Caco-2 (cell line): ENCODE measurements at regions of chr16 and their contacts with region 1.

Region 1: GRCh38 chr16:29815793-29816693 is at the start of gene PAGR1:
- DNase-seq: peak; percentile 97 to 98
- H3K4me3 ChIP-seq: peak within 1 kb of the TSS; percentile 69
- H3K4me3 Mint-ChIP-seq: peak within 1 kb of the TSS; percentile 89
- H3K27ac Mint-ChIP-seq: peak within 1 kb of the TSS; percentile 93
- H3K4me1 ChIP-seq: peaks cover 14% of the 10 kb centered on the region
- H3K4me1 Mint-ChIP-seq: peaks cover 41% of the 10 kb centered on the region
- H3K27me3 ChIP-seq: no peaks in the 10 kb centered on the region
- H3K27me3 Mint-ChIP-seq: no peaks in the 10 kb centered on the region
- CTCF ChIP-seq: peak; percentile 92 to 94
- total RNA-seq, gene PAGR1: 31.4 and 33.0 TPM in 2 replicates

Region 2: DNA sequence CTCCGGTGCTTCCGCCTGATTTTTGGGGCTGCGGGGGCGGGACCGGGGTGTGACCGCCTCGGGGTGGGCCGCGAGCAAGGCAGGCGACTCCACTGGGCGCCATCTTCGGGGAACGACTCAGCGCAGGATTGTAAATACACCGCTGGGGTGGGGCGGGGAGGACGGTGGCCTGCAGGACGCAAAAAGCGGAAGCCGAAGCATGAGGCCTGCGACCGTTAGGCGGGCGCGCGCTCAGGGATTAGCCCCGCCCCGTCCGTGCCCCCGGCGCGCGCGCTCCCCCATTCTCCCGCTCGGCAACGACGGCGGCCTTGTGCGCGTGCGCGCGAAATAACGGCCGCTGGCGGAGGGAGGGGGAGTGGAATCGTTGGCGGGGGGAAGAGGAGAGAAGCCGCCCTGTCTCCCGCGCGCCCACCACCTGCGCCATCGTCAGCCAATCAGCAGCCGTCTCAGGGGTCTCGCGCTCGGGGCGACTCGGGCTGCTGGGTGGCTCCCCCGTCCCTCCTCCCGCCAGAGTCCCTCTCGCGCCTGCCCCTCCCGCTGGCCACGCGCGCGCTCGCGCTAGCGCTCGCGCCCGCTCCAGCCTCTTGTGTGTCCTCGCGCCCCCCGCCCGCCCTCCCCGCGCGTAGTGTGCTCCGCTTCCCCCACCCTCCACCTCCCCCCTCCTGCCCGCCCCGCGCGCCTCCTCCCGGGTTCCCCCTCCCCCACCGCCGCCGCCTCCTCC is 10.5 kb before region 1 on chr16:
- CTCF ChIA-PET with region 1: interaction called, 22 read pairs
- POLR2A ChIA-PET with region 1: interaction called, 10 read pairs
- intact Hi-C with region 1: no loop called
- DNase-seq: peak; percentile 96 to 97
- H3K4me3 ChIP-seq: peak overlapping the region; percentile 59
- H3K4me3 Mint-ChIP-seq: peak overlapping the region; percentile 79
- H3K27ac Mint-ChIP-seq: peak overlapping the region; percentile 92
- H3K4me1 ChIP-seq: peaks cover 20% of the 10 kb centered on the region; the same call in 1 of the 2 replicates
- H3K4me1 Mint-ChIP-seq: peaks cover 26% of the 10 kb centered on the region
- H3K27me3 ChIP-seq: no peaks in the 10 kb centered on the region
- H3K27me3 Mint-ChIP-seq: no peaks in the 10 kb centered on the region
- CTCF ChIP-seq: no peak

Region 3: GRCh38 chr16:29848420-29849297 is 32.6 kb after region 1 on chr16:
- CTCF ChIA-PET with region 1: interaction called, 16 read pairs
- POLR2A ChIA-PET with region 1: no interaction called
- intact Hi-C with region 1: loop called (anchors 2 kb)
- DNase-seq: peak; percentile 65 to 70
- H3K4me3 ChIP-seq: no peak overlapping the region
- H3K4me3 Mint-ChIP-seq: no peak overlapping the region
- H3K27ac Mint-ChIP-seq: no peak overlapping the region
- H3K4me1 ChIP-seq: peaks cover 7% of the 10 kb centered on the region; the same call in 1 of the 2 replicates
- H3K4me1 Mint-ChIP-seq: peaks cover 6% of the 10 kb centered on the region
- H3K27me3 ChIP-seq: no peaks in the 10 kb centered on the region
- H3K27me3 Mint-ChIP-seq: no peaks in the 10 kb centered on the region
- CTCF ChIP-seq: peak; percentile 55 to 73

Region 4: DNA sequence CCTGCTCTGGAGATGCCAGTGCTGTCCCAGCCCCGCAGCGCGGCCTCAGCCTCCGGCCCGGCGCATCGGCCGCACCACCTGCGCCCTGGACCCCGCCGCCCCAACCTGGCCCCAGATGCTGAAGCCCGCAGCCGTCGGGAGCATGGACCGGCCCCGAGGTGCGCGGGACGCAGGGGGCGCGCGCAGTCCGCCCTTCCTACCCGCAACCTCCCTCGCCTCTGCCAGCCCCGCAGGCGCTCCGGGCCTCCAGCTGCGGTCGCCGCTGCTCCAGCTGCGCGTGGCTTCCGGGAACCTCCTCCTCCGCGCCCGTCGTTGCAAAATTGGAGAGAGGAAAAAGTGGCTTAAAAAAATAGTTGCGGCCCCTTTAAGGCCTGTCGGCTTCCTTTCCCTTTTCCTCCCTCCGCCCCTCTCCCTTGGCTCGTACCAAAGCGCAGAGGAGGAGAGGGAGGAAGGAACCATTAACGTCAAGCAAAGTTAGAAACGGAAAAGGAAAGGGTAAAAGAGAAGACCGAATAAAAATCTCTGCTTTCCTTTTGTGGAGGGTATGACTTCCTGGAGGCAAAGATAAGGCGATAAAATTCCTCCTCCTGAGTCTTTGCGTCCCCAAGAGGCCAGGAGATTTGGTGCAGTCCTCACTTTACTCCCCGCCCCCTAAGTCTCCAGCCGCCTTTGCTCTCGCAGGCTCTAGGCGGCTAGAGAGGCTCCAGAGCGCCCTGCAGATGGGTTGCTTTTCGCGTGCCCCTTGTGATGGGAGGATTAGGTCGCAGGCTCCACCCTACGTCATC is 47.0 kb after region 1 on chr16 and contains the start of gene CDIPT:
- CTCF ChIA-PET with region 1: no interaction called
- POLR2A ChIA-PET with region 1: no interaction called
- intact Hi-C with region 1: loop called (anchors 2 kb)
- DNase-seq: peak; percentile 92 to 96
- H3K4me3 ChIP-seq: peak within 1 kb of the TSS; percentile 80
- H3K4me3 Mint-ChIP-seq: peak within 1 kb of the TSS; percentile 93
- H3K27ac Mint-ChIP-seq: peak within 1 kb of the TSS; percentile 100
- H3K4me1 ChIP-seq: peaks cover 6% of the 10 kb centered on the region; the same call in 1 of the 2 replicates
- H3K4me1 Mint-ChIP-seq: peaks cover 6% of the 10 kb centered on the region
- H3K27me3 ChIP-seq: no peaks in the 10 kb centered on the region
- H3K27me3 Mint-ChIP-seq: no peaks in the 10 kb centered on the region
- CTCF ChIP-seq: peak; percentile 13 to 66
- total RNA-seq, gene CDIPT: 56.6 and 57.1 TPM in 2 replicates

Region 5: DNA sequence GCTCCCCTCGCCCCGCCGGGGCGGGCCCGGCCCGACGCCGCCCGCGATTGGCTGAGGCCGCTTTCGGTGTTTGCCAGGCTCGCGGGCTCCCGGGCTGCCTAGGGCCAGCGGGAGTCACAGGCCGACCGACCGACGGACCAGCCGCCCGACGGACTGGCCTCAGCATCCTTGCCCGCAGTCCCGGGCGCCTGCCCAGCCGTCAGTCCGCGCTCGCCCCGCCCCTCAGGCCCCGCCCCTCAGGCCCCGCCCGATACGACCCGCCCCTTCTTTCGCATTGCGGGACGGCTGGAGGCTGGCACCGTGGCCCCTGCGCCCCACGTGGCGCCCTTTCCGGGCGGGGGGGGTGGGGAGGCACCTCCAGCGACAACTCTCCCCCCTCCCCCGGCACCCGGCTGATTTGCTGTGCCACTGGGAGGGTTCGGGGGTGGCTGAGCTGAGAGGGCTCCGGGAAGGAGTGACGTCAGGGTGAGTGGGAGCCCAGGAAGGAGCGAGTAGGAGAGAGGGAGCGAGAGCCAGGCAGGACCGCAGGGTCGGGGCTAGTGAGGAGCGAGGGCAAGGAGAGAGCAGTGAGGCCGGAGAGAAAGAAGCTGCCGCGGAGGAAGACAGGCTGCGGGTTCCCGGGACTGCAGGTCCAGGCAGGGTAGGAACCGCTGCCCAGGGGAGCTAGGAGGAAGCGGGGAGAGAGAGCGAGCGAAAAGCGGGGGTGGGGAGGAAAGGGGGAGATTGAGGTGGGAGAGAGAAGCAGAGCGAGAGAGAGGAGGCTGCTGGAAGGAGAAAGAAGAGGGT is 84.3 kb after region 1 on chr16 and contains the start of gene ASPHD1:
- CTCF ChIA-PET with region 1: interaction called, 3 read pairs
- POLR2A ChIA-PET with region 1: no interaction called
- intact Hi-C with region 1: loop called (anchors 5 kb)
- DNase-seq: peak; percentile 73 to 83
- H3K4me3 ChIP-seq: peak within 1 kb of the TSS; percentile 66
- H3K4me3 Mint-ChIP-seq: peak within 1 kb of the TSS; percentile 93
- H3K27ac Mint-ChIP-seq: peak within 1 kb of the TSS; percentile 88
- H3K4me1 ChIP-seq: peaks cover 22% of the 10 kb centered on the region; the same call in 1 of the 2 replicates
- H3K4me1 Mint-ChIP-seq: peaks cover 22% of the 10 kb centered on the region
- H3K27me3 ChIP-seq: no peaks in the 10 kb centered on the region
- H3K27me3 Mint-ChIP-seq: no peaks in the 10 kb centered on the region
- CTCF ChIP-seq: no peak
- total RNA-seq, gene ASPHD1: 13.2 and 14.7 TPM in 2 replicates

Region 6: DNA sequence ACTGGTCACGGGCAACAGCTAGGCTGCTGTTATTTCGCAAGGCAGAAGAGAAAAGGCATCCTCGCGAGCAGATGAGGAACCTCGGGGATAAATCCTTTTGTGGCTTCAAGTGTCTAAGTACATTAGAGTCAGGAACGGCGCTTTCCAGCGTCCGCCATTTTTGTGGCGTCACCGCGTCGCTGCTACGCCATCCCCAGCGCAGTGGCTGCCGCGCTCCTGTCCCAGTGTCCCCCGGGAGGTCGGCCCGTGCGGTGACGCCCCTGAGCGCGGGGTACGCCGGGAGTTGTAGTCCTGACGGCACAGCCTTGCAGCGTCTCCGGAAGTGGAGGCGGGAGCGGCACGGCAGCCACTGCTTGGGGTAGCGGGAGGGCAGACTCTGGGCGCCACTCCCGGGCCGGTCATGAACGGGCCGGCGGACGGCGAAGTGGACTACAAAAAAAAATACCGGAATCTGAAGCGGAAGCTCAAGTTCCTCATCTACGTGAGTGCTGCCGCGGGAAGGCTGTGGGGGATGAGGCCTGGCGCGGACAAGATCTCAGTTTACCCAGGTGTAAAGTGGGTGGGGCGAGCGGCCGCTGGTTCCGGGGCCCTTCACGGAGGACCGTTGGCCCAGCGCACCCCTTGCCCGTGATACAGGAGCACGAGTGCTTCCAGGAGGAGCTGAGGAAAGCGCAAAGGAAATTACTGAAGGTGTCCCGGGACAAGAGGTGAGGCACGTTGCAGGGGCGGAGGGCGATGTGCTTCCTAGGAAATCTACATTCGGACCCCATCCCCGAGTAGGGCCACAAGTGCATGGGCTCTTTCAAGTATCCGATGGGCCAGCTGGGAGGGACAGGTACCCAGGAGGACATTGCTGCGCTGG is 180.1 kb after region 1 on chr16 and contains the start of gene INO80E:
- CTCF ChIA-PET with region 1: no interaction called
- POLR2A ChIA-PET with region 1: no interaction called
- intact Hi-C with region 1: loop called (anchors 10 kb)
- DNase-seq: peak; percentile 97 to 98
- H3K4me3 ChIP-seq: peak within 1 kb of the TSS; percentile 68
- H3K4me3 Mint-ChIP-seq: peak within 1 kb of the TSS; percentile 99
- H3K27ac Mint-ChIP-seq: peak within 1 kb of the TSS; percentile 65
- H3K4me1 ChIP-seq: peaks cover 11% of the 10 kb centered on the region; the same call in 1 of the 2 replicates
- H3K4me1 Mint-ChIP-seq: peaks cover 12% of the 10 kb centered on the region
- H3K27me3 ChIP-seq: no peaks in the 10 kb centered on the region
- H3K27me3 Mint-ChIP-seq: no peaks in the 10 kb centered on the region
- CTCF ChIP-seq: no peak
- total RNA-seq, gene INO80E: 58.6 and 58.8 TPM in 2 replicates

Region 7: DNA sequence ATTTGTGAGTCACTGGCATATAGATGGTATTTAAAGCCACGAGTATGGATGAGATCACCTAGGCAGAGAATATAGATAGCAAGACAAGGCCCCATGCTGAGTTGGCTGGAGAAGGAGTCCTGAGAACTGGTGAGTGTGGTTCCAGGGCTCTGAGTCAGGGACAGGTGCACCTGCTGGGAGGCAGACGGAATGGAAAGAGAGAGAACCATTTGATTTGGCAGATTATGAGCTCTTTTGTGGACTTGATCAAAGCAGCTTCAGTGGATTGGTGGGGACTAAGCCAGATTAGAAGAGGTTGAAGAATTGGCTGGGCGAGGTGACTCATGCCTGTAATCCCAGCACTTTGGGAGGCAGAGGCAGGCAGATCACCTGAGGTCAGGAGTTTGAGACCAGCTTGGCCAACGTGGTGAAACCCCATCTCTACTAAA is 202.7 kb after region 1 on chr16:
- CTCF ChIA-PET with region 1: no interaction called
- POLR2A ChIA-PET with region 1: no interaction called
- intact Hi-C with region 1: loop called (anchors 2 kb)
- DNase-seq: no peak
- H3K4me3 ChIP-seq: no peak overlapping the region
- H3K4me3 Mint-ChIP-seq: no peak overlapping the region
- H3K27ac Mint-ChIP-seq: no peak overlapping the region
- H3K4me1 ChIP-seq: no peaks in the 10 kb centered on the region
- H3K4me1 Mint-ChIP-seq: no peaks in the 10 kb centered on the region
- H3K27me3 ChIP-seq: no peaks in the 10 kb centered on the region
- H3K27me3 Mint-ChIP-seq: no peaks in the 10 kb centered on the region
- CTCF ChIP-seq: no peak